GM12878 (cell line): ENCODE measurements at regions of chr17 and their contacts with region 1.

Region 1: DNA sequence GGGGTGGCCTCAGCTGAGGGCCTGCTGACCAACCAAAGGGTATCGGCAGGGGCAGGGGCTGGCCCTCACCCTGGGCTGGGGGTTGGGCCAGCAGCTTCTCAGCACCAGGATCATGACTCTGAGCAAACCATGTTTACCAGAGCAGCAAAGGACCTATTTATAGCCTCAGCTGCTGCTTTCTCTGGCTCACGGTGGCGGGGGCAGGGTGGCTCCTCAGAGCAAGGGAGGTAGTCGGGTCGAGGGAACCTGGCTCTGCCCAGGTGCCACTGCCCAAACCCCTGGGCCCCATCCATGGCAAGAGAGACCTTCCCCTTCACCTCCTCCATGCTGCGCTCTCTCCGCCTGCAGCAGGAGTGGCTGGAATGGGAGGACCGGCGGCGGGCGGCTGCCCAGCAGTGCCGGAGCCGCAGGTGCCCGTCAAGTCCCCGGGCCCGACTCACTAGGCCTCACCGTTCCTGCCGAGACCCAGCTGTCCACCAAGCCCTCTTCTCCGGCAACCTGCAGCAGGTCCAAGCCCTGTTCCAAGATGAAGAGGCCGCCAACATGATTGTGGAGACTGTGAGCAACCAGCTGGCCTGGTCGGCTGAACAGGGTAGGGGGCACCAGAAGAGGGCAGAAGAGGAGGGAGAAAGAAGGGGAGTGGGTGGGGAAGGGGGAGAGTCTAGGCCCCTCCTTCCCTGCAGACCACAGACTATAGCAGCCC is at the start of gene ASB16:
- DNase-seq: no peak
- ATAC-seq: no peak
- H3K4me3 ChIP-seq: no peak within 1 kb of the TSS
- H3K27ac ChIP-seq: no peak within 1 kb of the TSS
- H3K4me1 ChIP-seq: peaks cover 5% of the 10 kb centered on the region
- H3K27me3 ChIP-seq: no peaks in the 10 kb centered on the region
- CTCF ChIP-seq: no peak
- EP300 ChIP-seq: no peak
- POLR2A ChIP-seq: 0 out of 2 replicates have a peak, but pooled peaks have one; percentile 18
- RAD21 ChIP-seq: no peak
- polyA plus RNA-seq, gene ASB16: 0.07 TPM in 1 of 2 experiments, not detected in the other

Region 2: DNA sequence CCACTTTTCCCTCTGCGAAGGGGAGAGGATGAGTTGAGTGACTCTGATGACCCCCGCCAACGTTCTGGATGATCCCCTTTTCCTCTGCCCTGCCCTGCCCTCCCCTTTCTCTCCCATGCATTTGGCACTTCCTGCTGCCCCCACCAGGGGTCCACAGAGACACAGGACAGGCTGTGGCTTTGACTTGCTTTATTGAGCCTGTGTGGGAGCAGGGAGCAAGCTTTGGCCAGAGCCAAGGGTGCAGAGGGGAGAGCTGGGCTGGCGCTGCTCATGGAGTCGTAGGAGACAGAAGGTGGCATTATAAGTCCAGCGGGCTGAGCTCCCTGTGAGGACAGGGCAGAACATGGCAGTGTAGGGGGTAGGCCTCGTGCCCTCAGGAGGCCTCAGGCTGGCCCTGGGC is 230.0 kb before region 1 on chr17:
- CTCF ChIA-PET with region 1: interaction called, 56 read pairs
- POLR2A ChIA-PET with region 1: no interaction called
- RAD21 ChIA-PET with region 1: interaction called, 28 read pairs
- SMC1A ChIA-PET with region 1: interaction called, 19 read pairs
- in situ Hi-C with region 1: loop called (anchors 5 kb)
- intact Hi-C with region 1: loop called (anchors 2 kb)
- DNase-seq: no peak
- ATAC-seq: peak; percentile 50
- H3K4me3 ChIP-seq: no peak overlapping the region
- H3K27ac ChIP-seq: no peak overlapping the region
- H3K4me1 ChIP-seq: no peaks in the 10 kb centered on the region
- H3K27me3 ChIP-seq: no peaks in the 10 kb centered on the region; a peak in 1 of 4 replicates
- CTCF ChIP-seq: peak; percentile 37 to 59 (median 43); a peak in 5 of 6 replicates
- EP300 ChIP-seq: no peak
- POLR2A ChIP-seq: no peak
- RAD21 ChIP-seq: peak; percentile 41

Region 3: DNA sequence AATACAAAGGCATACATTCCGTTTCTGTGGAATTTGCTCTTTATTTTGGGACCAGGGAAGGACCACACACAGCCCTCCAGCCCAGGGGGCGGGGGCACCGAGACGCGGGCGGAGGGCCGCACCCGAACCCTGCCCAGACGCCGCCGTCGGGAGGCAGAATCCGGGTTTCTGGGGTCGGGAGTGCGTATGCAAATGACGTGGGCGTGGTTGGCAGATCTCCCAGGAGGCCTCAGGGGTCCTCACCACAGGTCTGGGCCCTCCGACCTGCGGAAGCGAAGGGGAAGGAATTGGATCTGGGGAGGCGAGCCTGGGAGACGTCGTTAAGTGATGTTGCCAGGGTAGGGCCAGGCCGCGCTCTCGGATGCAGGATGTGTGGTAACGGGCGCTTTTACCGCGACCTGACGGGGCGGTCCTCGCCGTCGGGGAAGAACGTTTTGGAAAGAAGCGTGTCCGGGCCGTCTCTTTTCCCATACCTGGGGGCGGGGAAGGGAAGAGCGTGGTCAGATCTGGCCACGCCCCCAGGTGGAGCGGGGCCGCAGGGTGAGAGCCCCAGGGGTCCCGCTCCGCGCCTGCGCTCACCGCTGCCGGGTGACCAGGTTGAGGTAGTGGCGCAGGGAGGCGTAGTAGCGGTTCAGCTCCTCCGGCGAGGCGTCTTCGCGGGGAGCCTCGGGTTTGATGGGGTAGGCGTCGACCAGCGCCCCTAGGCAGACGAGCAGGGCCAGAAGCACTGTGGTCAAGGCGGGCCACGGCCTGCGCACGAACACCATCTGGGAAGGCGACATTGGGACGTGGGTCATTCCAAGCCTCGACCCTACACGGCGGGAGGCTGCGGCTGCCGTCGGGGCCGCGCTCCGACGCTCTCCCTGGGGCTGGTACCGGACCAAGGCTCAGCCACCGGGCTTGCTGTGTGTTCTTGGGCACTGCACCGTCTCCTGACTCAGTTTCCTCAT is 217.7 kb before region 1 on chr17:
- CTCF ChIA-PET with region 1: no interaction called
- POLR2A ChIA-PET with region 1: interaction called, 10 read pairs
- RAD21 ChIA-PET with region 1: no interaction called
- SMC1A ChIA-PET with region 1: no interaction called
- in situ Hi-C with region 1: no loop called
- intact Hi-C with region 1: no loop called
- DNase-seq: no peak
- ATAC-seq: no peak
- H3K4me3 ChIP-seq: no peak overlapping the region
- H3K27ac ChIP-seq: no peak overlapping the region
- H3K4me1 ChIP-seq: no peaks in the 10 kb centered on the region
- H3K27me3 ChIP-seq: peaks cover 0 to 6% of the 10 kb centered on the region in 2 experiments; a peak in 2 of 4 replicates
- CTCF ChIP-seq: no peak
- EP300 ChIP-seq: no peak
- POLR2A ChIP-seq: no peak
- RAD21 ChIP-seq: no peak

Region 4: DNA sequence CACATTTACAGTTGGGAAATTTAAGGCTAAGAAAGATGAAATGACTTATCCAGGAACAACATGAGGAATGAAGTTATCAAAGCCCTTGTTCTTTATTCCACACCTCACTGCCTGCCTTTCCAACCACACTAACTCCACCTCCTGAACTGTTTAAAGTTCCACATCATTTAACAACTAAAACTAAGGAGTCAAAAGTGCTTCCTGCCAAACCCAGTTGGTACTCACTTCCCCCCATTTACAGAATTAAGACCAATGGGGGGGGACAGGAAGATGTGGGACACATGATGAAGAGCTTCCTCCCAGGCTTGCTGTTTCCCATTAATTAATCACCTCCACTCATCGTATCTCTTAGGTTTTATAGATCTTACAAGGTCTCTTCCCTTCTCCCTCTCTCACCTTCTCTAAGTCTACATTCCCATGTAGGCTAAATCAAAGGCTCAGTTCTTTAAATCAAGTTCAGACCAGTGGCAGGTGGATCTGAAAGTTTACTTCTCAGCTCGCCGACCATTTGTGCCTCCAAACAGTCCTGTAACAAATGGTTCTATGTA is 136.7 kb before region 1 on chr17:
- CTCF ChIA-PET with region 1: no interaction called
- POLR2A ChIA-PET with region 1: no interaction called
- RAD21 ChIA-PET with region 1: no interaction called
- SMC1A ChIA-PET with region 1: no interaction called
- in situ Hi-C with region 1: no loop called
- intact Hi-C with region 1: no loop called
- DNase-seq: no peak
- ATAC-seq: no peak
- H3K4me3 ChIP-seq: no peak overlapping the region
- H3K27ac ChIP-seq: no peak overlapping the region
- H3K4me1 ChIP-seq: no peaks in the 10 kb centered on the region
- H3K27me3 ChIP-seq: no peaks in the 10 kb centered on the region
- CTCF ChIP-seq: no peak
- EP300 ChIP-seq: no peak
- POLR2A ChIP-seq: no peak
- RAD21 ChIP-seq: no peak

Region 5: DNA sequence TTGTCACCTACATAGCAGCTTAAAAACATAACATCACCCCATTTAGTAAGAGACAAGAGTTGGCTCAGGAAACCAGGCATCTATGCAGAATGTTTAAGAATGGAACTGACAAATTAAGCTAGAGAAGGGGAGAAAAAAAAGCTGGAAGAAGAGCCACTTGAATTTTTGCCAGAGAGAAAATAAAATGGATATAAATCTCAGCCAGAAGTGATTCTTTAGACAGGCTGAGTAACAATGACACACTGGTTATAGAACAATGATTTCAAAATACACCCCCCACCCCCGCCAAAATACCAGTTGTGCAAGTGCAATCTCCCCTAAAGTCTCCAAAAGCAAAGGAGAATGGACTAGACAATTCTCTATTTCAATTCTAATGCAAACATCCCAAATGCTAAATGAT is 126.6 kb before region 1 on chr17:
- CTCF ChIA-PET with region 1: interaction called, 18 read pairs
- POLR2A ChIA-PET with region 1: no interaction called
- RAD21 ChIA-PET with region 1: interaction called, 8 read pairs
- SMC1A ChIA-PET with region 1: interaction called, 17 read pairs
- in situ Hi-C with region 1: no loop called
- intact Hi-C with region 1: no loop called
- DNase-seq: no peak
- ATAC-seq: no peak
- H3K4me3 ChIP-seq: no peak overlapping the region
- H3K27ac ChIP-seq: no peak overlapping the region
- H3K4me1 ChIP-seq: no peaks in the 10 kb centered on the region
- H3K27me3 ChIP-seq: no peaks in the 10 kb centered on the region
- CTCF ChIP-seq: no peak
- EP300 ChIP-seq: no peak
- POLR2A ChIP-seq: no peak
- RAD21 ChIP-seq: no peak

Region 6: DNA sequence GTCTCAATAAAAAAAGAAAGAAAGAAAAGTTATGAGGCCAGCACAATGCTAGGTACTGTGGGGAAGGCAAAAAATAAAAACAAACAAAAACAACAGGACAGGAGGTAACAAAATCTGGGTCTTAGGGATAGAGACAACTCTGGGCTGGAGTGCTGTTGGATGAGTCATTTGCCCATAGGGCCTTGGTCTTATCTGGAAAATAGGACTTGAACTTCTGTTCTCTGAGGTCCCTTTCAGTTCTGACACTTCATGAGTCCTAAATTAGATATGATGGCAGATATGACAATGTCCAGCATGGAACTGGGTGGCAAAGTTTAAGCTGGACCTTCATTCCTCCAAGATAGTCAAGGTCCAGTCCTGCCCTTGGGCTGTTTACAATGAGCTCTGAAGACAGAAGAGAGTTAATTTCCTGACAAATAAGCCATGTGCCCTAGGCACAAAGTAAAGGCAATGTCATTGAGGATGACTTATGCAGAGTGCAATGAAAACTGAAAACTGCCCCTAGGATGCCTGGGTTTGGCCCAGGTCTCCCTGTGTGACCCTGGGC is 38.3 kb before region 1 on chr17:
- CTCF ChIA-PET with region 1: interaction called, 13 read pairs
- POLR2A ChIA-PET with region 1: no interaction called
- RAD21 ChIA-PET with region 1: interaction called, 4 read pairs
- SMC1A ChIA-PET with region 1: interaction called, 3 read pairs
- in situ Hi-C with region 1: no loop called
- intact Hi-C with region 1: no loop called
- DNase-seq: no peak
- ATAC-seq: peak; percentile 61
- H3K4me3 ChIP-seq: no peak overlapping the region
- H3K27ac ChIP-seq: peak overlapping the region; percentile 19
- H3K4me1 ChIP-seq: peaks cover 9% of the 10 kb centered on the region
- H3K27me3 ChIP-seq: no peaks in the 10 kb centered on the region; a peak in 1 of 4 replicates
- CTCF ChIP-seq: no peak
- EP300 ChIP-seq: no peak
- POLR2A ChIP-seq: no peak
- RAD21 ChIP-seq: no peak

Region 7: GRCh38 chr17:44149750-44150329 is 20.8 kb before region 1 on chr17:
- CTCF ChIA-PET with region 1: interaction called, 23 read pairs
- POLR2A ChIA-PET with region 1: no interaction called
- RAD21 ChIA-PET with region 1: interaction called, 8 read pairs
- SMC1A ChIA-PET with region 1: interaction called, 8 read pairs
- in situ Hi-C with region 1: no loop called
- intact Hi-C with region 1: no loop called
- DNase-seq: no peak
- ATAC-seq: no peak
- H3K4me3 ChIP-seq: no peak overlapping the region
- H3K27ac ChIP-seq: no peak overlapping the region
- H3K4me1 ChIP-seq: no peaks in the 10 kb centered on the region; the same call in 1 of the 2 replicates
- H3K27me3 ChIP-seq: no peaks in the 10 kb centered on the region
- CTCF ChIP-seq: no peak
- EP300 ChIP-seq: no peak
- POLR2A ChIP-seq: no peak
- RAD21 ChIP-seq: no peak

Region 8: DNA sequence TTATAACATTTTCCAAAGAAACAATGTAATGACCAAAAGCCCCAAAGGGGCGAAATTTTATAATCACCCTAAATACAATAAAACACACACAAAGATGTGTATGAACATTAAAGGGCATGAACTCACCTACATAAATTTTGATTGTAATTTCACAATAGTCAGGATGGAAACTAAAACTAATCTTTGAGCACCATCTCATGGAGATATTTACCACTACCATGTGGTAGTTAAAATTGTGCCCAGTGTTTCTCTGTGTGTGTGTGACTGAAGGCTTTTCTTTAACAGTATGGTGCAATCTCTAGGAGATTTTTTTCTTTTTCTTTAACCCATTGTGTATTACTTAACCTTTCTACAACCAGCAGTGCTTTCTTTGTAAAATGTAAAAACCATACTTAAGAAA is 465.9 kb after region 1 on chr17:
- CTCF ChIA-PET with region 1: no interaction called
- POLR2A ChIA-PET with region 1: no interaction called
- RAD21 ChIA-PET with region 1: no interaction called
- SMC1A ChIA-PET with region 1: no interaction called
- in situ Hi-C with region 1: no loop called
- intact Hi-C with region 1: no loop called
- DNase-seq: no peak
- ATAC-seq: peak; percentile 46; the same call in 2 of the 3 replicates
- H3K4me3 ChIP-seq: no peak overlapping the region
- H3K27ac ChIP-seq: no peak overlapping the region
- H3K4me1 ChIP-seq: no peaks in the 10 kb centered on the region
- H3K27me3 ChIP-seq: no peaks in the 10 kb centered on the region; a peak in 2 of 4 replicates
- CTCF ChIP-seq: peak in 2 of 3 experiments; percentile 21 to 45; a peak in 3 of 6 replicates
- EP300 ChIP-seq: no peak
- POLR2A ChIP-seq: no peak
- RAD21 ChIP-seq: peak; percentile 51